ENCODE measurements at regions of chr13 and their contacts with region 1.

Region 1: GRCh38 chr13:78364711-78365110 is 238.6 kb downstream of the POU4F1 start:
- DNase-seq: no peak
- H3K4me3 ChIP-seq: no peak overlapping the region
- H3K27ac ChIP-seq: no peak overlapping the region
- H3K4me1 ChIP-seq: no peaks in the 10 kb centered on the region
- H3K27me3 ChIP-seq: no peaks in the 10 kb centered on the region
- CTCF ChIP-seq: no peak

Region 2: GRCh38 chr13:78540058-78540457 is 175.3 kb after region 1 on chr13:
- intact Hi-C with region 1: loop called (anchors 5 kb)
- DNase-seq: no peak
- H3K4me3 ChIP-seq: no peak overlapping the region
- H3K27ac ChIP-seq: no peak overlapping the region
- H3K4me1 ChIP-seq: no peaks in the 10 kb centered on the region
- H3K27me3 ChIP-seq: no peaks in the 10 kb centered on the region
- CTCF ChIP-seq: no peak

Measured in tibial artery (tissue), 4 donors.